Activated CD4-positive, alpha-beta T cell treated with anti-CD3 and anti-CD28 coated beads for 36 hours (primary cell): ENCODE measurements at regions of chr16 and their contacts with region 1.

Region 1: DNA sequence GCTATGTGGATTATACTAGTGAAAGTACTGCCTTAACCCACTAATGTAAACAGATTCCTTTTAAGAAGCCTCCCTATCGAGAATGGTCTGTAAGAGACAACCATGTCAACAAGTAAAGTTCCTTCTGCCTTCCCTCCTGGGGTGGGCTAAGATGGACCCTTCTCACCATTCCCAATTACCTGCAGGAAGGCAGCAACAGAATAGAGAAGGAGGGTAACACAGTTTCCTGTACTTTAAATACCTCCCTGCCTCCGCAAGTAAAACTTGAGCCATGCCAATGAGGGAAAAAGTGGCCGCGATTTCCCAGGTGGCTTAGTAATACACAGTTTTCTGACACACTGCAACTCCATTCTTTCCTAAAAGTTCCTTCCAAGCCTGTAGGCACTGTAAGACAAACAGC is 45.2 kb downstream of the TOX3 start:
- DNase-seq: no peak
- ATAC-seq: no peak
- H3K4me3 Mint-ChIP-seq: no peak overlapping the region
- H3K27ac Mint-ChIP-seq: no peak overlapping the region
- H3K4me1 Mint-ChIP-seq: no peaks in the 10 kb centered on the region
- H3K27me3 Mint-ChIP-seq: no peaks in the 10 kb centered on the region

Region 2: GRCh38 chr16:52408191-52408845 is 93.4 kb before region 1 on chr16:
- CTCF ChIA-PET with region 1: no interaction called
- POLR2A ChIA-PET with region 1: no interaction called
- intact Hi-C with region 1: no loop called
- DNase-seq: no peak
- ATAC-seq: no peak
- H3K4me3 Mint-ChIP-seq: no peak overlapping the region
- H3K27ac Mint-ChIP-seq: no peak overlapping the region
- H3K4me1 Mint-ChIP-seq: no peaks in the 10 kb centered on the region
- H3K27me3 Mint-ChIP-seq: no peaks in the 10 kb centered on the region

Region 3: GRCh38 chr16:52446080-52446479 is 55.7 kb before region 1 on chr16:
- CTCF ChIA-PET with region 1: no interaction called
- POLR2A ChIA-PET with region 1: no interaction called
- intact Hi-C with region 1: loop called in 1 of 2 experiments (anchors 10 kb)
- DNase-seq: no peak
- ATAC-seq: no peak
- H3K4me3 Mint-ChIP-seq: no peak overlapping the region
- H3K27ac Mint-ChIP-seq: no peak overlapping the region
- H3K4me1 Mint-ChIP-seq: no peaks in the 10 kb centered on the region
- H3K27me3 Mint-ChIP-seq: no peaks in the 10 kb centered on the region